Head of caudate nucleus (tissue), 42 donors: ENCODE measurements at regions of chr15 and their contacts with region 1.

Region 1: DNA sequence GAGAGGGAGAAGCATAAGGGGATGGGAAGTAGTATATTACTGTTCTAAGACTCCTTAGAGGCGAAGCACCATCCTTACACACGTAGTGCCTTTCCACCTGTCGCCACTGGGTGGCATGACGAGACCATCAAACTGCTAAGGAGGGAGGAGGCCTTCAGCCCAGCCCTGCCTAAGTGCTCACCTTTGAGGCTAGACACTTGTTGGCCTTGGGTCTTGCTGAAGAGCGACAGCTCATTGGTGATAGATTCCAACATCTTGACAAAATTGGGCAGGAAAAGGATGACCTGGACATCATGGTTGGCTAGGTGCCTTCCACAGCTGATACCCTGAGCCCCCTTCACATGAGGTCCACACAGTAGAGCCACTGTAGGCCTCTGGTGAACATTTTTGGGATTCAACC is 19.6 kb downstream of the CLK3 start:
- DNase-seq: peak; percentile 49 to 87 (median 74)

Region 2: DNA sequence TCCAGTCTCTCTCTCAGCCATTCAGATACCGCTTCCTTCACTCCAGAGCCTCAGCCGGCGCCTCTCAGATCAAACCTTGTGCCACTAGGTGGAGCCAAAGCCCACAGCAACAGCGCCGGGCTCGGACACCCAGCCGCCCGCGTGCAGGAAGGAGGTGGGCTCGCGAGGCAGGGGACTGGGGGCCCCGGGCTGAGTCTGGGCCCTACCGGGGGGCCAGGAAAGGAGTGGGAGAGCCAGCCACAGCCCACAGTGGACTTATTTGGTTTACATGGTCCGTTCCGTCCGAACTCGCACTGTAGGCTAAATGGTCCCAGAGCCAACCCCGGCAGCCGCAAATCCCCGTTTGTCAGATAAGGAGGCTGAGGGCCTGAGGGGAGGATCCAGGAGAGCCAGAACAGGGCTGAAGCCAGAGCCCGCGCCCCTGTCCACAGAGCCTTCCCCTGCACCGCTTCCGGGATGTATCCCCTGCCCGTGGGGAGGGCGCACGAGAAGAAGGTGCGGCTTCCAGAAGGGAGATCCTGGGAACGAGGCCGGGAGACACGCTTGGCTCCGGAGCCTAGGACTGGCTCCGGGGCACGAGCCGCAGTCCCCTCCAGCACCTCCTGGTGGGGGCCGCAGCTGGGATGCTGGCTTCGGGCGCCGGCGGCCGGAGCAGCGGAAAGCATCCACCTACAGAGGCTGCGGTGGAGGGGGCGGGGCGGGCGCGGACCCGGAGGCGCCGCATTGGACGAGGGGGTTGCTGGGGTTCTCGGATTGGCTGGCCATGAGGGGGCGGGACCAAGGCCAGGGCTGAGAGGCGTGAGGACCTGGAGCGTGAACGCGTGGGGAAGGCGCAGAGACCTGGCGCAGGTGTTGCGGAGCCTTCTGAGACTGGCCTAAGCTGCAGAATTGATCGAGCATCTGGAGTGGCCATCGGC is 261.2 kb before region 1 on chr15:
- intact Hi-C with region 1: loop called (anchors 5 kb)
- DNase-seq: peak; percentile 83 to 96 (median 91)

Region 3: DNA sequence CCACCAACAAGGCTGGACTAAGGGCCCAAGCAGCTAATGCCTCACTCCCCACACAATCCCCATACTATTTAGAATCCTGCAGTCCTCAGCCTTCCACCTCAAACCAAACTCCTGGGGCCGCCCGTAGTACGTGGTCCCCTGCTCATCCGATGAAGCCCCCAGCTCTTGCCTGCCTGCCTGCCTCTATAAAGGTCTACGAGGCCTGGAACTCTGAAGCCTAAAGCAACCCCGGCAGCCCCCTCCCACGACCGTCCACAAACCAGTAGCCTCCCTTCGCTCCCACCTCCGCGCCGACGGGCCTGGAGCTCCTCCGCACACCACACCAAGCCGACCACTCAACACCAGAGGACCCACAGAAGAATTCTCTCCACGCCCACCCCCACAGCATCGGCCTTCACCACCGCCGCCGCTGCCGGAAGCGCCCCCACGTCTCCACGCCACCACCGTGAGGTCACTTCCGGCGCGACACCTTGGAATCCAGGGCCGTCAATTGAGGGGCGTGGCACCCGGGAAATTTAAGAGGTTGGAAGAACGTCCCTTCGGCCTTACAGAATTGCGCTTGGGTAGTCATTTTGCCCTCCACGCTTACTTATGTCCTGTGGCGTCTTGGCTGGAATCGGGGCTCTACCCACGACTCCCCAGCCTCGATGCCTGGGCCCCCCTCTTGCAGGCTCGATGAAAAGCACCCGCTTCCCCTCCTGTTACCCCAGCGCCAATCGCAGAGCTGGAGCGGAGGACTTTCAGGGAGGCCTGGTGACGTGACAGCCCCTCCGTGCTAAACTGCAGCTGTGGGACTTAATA is 60.6 kb after region 1 on chr15 and contains the start of gene EDC3:
- intact Hi-C with region 1: loop called (anchors 10 kb)
- DNase-seq: peak; percentile 84 to 97 (median 92)

Region 4: GRCh38 chr15:74768771-74769342 is 133.6 kb after region 1 on chr15:
- intact Hi-C with region 1: loop called (anchors 2 kb)
- DNase-seq: peak; percentile 59 to 89 (median 76)